Activated CD4-positive, alpha-beta memory T cell treated with anti-CD3 and anti-CD28 coated beads, Interleukin-2, amount 10 ng/mL, durations not matched to agents 7 days and 5 days (primary cell): ENCODE measurements at regions of chr6 and their contacts with region 1.

Region 1: GRCh38 chr6:142692942-142693341 is 252.0 kb downstream of the HIVEP2 start:
- DNase-seq: peak; percentile 64
- H3K4me3 Mint-ChIP-seq: no peak overlapping the region
- H3K27ac Mint-ChIP-seq: no peak overlapping the region
- H3K4me1 Mint-ChIP-seq: peaks cover 6% of the 10 kb centered on the region
- H3K27me3 Mint-ChIP-seq: no peaks in the 10 kb centered on the region

Region 2: DNA sequence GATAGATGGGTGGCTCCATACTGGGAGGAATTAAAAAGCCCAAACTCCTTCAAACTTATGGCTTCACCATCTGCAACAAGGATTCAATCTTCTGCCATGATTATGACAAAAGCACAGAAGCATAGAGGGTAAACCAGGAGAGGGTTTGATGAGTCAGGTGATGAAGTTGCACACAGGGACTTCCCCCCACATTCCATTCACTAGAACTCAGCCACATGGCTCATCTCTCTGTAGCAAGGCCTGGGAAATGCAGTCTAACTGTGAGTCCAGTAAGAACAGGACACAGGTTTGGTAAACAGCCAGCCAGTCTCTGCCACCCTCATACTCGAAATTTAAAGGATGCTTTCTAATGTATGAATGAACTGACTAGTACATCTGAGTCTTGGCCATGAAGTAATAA is 109.2 kb after region 1 on chr6:
- CTCF ChIA-PET with region 1: no interaction called
- POLR2A ChIA-PET with region 1: no interaction called
- DNase-seq: no peak
- H3K4me3 Mint-ChIP-seq: no peak overlapping the region
- H3K27ac Mint-ChIP-seq: no peak overlapping the region
- H3K4me1 Mint-ChIP-seq: peaks cover 34% of the 10 kb centered on the region
- H3K27me3 Mint-ChIP-seq: no peaks in the 10 kb centered on the region

Region 3: GRCh38 chr6:143026696-143027449 is 333.9 kb after region 1 on chr6:
- CTCF ChIA-PET with region 1: interaction called, 50 read pairs
- POLR2A ChIA-PET with region 1: interaction called, 5 read pairs
- DNase-seq: peak; percentile 53
- H3K4me3 Mint-ChIP-seq: no peak overlapping the region
- H3K27ac Mint-ChIP-seq: no peak overlapping the region
- H3K4me1 Mint-ChIP-seq: no peaks in the 10 kb centered on the region
- H3K27me3 Mint-ChIP-seq: peaks cover 1% of the 10 kb centered on the region

Region 4: DNA sequence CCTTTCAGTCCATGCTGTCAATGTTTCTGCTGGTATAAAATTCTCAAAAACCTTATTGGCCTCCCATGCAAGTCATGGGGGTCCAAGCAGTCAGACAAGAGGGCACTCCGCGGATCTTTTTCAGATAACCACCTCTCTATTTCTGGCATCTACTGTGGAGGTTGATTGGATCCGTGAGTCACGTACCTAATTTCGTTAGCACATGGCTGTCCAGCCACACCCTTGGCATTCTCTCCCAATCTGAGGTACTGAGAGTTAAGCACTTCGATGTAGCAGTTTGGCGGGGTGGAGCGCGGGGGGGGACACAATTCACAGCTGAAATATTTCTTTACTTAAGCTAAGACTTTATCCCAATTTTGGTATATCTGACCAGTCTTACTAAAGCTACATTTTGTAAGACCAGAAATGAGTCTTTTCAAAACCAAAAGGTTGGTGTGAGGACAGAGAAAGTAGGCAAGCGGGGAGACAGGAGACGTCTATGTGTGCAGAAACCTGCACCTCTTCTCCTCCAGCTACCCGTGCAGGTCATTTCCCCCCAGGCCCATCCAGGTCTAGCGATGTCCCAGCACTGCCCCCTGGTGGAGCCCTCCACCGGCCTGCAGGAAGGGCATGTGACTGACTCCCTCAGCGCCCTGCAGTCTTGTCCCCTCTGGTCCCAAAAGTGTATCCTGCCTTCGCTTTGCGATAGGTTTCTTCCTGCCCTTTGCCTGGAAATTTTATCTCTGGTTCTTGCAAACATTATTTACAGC is 644.4 kb after region 1 on chr6:
- CTCF ChIA-PET with region 1: interaction called, 14 read pairs
- POLR2A ChIA-PET with region 1: no interaction called
- DNase-seq: peak; percentile 47
- H3K4me3 Mint-ChIP-seq: no peak overlapping the region
- H3K27ac Mint-ChIP-seq: no peak overlapping the region
- H3K4me1 Mint-ChIP-seq: peaks cover 9% of the 10 kb centered on the region
- H3K27me3 Mint-ChIP-seq: no peaks in the 10 kb centered on the region